Activated B cell treated with CpG ODN at 0.5 μM for 24 hours (primary cell): ENCODE measurements at regions of chr17 and their contacts with region 1.

Region 1: DNA sequence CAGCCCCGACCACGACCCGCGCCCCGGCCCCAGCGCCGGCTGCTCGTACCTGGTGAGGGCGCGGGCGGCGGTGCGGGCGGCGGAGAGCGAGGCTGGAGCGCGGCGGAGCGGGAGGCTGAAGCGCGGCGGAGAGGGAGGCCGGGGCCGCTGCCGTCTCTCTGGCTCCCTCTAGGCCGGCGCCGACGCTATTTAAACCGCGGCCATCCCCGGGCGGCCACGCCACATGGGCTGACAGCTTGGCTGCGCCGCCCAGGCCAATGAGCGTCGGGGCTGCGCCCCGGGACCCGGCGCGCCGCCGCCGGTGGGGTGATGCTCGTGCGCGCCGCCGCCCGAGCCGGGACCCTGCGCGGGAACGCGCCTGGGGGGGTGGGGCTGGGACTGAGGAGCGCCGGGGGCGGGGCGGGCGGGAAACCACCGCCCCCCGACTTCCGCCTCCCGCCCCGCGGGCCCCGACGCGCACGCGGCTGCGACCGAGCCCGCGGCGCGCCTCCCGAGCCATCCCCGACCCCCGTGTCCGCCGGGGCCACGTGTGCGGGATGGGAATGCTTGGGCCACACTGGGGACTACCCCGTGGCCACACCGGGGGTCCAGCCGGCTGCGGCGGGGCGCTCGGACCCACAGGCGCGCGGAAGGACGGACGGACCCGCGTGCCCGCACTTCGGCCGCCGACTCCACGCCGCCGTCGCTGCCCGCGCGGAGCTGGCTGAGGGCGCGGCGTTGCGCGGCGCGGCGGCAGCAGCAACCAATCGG is at the start of gene FASN:
- DNase-seq: peak; percentile 90
- ATAC-seq: peak; percentile 78
- H3K4me3 Mint-ChIP-seq: peak within 1 kb of the TSS; percentile 73
- H3K27ac Mint-ChIP-seq: no peak within 1 kb of the TSS
- H3K4me1 Mint-ChIP-seq: peaks cover 16% of the 10 kb centered on the region
- H3K27me3 Mint-ChIP-seq: no peaks in the 10 kb centered on the region
- CTCF ChIP-seq: no peak
- total RNA-seq, gene FASN: 104 and 121 TPM in 2 replicates

Region 2: DNA sequence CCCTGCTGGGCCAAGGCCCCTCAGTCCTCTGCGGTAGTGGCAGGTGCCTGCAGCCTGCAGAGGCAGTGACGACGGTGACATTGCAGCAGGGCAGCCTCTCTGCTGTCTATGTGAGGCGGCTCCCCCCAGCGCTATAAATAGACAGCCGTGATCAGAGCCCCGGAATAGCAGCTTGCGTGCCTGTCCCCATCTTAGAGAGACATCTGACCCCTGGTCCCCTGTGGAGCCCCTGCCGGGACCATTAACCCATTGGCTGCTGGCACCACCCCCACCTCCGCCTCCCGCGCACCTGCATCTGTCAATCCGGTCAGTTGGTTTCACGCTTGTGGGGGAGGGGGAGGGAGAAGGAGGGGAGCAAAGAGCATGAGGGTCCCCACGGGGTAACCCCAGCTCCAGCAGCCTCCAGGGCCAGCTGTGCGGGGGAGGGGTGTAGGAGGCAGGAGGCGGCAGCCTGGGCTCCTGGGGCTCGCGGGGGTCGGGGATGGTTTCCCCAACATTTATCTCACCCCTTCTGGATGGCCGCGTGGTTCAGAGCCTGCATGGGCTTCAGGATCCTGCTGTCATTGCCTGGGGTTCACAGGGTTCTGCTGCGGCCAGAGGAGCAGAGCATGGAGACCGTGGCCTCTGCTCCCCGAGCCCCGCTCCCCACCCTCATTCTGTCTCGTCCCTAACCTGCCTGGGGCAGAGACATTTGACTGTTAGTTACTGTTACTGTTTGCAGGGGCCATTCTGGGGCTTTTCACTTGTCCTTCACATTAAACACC is 156.3 kb before region 1 on chr17:
- CTCF ChIA-PET with region 1: no interaction called
- POLR2A ChIA-PET with region 1: interaction called, 3 read pairs
- intact Hi-C with region 1: loop called (anchors 5 kb)
- DNase-seq: no peak
- ATAC-seq: no peak
- H3K4me3 Mint-ChIP-seq: no peak overlapping the region
- H3K27ac Mint-ChIP-seq: no peak overlapping the region
- H3K4me1 Mint-ChIP-seq: peaks cover 9% of the 10 kb centered on the region
- H3K27me3 Mint-ChIP-seq: peaks cover 4% of the 10 kb centered on the region
- CTCF ChIP-seq: no peak

Region 3: DNA sequence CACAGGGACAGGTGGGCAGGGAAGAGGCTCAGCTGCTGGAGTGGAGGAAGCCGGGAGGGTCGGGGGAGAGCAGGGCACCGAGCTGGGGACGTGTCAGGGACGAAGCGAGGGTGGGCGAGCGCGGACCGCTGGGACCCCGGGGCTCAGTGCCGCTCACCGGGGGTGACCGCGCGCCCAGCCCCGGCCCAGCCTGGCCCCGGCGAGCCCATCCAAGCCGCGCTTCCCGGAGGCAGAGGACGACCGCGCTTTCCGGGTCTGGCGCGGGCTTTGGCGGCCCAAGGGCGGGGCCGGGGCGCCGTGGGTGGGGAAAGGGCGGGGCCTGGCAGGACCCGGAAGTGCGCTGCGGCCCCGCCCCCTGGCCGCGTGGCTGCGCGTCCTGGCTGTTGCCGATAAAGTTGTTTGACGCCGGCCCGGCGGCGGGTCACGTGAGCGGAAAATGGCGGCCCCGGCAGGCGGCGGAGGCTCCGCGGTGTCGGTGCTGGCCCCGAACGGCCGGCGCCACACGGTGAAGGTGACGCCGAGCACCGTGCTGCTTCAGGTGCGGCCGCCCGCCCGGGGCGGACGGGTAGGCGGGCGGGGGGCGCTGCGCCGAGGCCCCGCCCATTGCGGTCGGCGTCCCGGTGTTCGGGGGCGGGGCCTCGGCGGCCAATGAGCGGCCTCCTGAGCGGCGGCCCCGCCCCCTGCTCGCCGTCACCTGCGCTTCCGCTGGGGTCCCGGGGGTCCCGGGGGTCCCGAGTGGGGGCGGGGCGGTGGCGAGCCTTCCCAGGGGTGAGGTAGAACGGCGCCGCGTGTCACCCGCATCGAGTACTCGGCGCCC is 120.8 kb before region 1 on chr17 and contains the start of gene ASPSCR1:
- CTCF ChIA-PET with region 1: no interaction called
- POLR2A ChIA-PET with region 1: no interaction called
- intact Hi-C with region 1: loop called (anchors 2 kb)
- DNase-seq: peak; percentile 94
- ATAC-seq: peak; percentile 92
- H3K4me3 Mint-ChIP-seq: peak within 1 kb of the TSS; percentile 95
- H3K27ac Mint-ChIP-seq: peak within 1 kb of the TSS; percentile 93
- H3K4me1 Mint-ChIP-seq: peaks cover 27% of the 10 kb centered on the region
- H3K27me3 Mint-ChIP-seq: no peaks in the 10 kb centered on the region
- CTCF ChIP-seq: no peak
- total RNA-seq, gene ASPSCR1: 40.0 and 50.0 TPM in 2 replicates

Region 4: GRCh38 chr17:82051776-82052637 is 46.2 kb before region 1 on chr17 and contains the starts of genes GPS1 and RFNG:
- CTCF ChIA-PET with region 1: no interaction called
- POLR2A ChIA-PET with region 1: no interaction called
- intact Hi-C with region 1: loop called (anchors 1 kb)
- DNase-seq: peak; percentile 84
- ATAC-seq: peak; percentile 91
- H3K4me3 Mint-ChIP-seq: peak within 1 kb of the TSS; percentile 84
- H3K27ac Mint-ChIP-seq: peak within 1 kb of the TSS; percentile 78
- H3K4me1 Mint-ChIP-seq: peaks cover 17% of the 10 kb centered on the region
- H3K27me3 Mint-ChIP-seq: no peaks in the 10 kb centered on the region
- CTCF ChIP-seq: no peak
- total RNA-seq, gene GPS1: 88.7 and 94.7 TPM in 2 replicates
- total RNA-seq, gene RFNG: 17.7 and 18.7 TPM in 2 replicates

Region 5: GRCh38 chr17:82320956-82321927 is 223.0 kb after region 1 on chr17:
- CTCF ChIA-PET with region 1: no interaction called
- POLR2A ChIA-PET with region 1: no interaction called
- intact Hi-C with region 1: no loop called
- DNase-seq: peak; percentile 76
- ATAC-seq: peak; percentile 81
- H3K4me3 Mint-ChIP-seq: peak overlapping the region; percentile 73
- H3K27ac Mint-ChIP-seq: peak overlapping the region; percentile 56
- H3K4me1 Mint-ChIP-seq: peaks cover 3% of the 10 kb centered on the region
- H3K27me3 Mint-ChIP-seq: peaks cover 6% of the 10 kb centered on the region
- CTCF ChIP-seq: peak; percentile 48

Region 6: DNA sequence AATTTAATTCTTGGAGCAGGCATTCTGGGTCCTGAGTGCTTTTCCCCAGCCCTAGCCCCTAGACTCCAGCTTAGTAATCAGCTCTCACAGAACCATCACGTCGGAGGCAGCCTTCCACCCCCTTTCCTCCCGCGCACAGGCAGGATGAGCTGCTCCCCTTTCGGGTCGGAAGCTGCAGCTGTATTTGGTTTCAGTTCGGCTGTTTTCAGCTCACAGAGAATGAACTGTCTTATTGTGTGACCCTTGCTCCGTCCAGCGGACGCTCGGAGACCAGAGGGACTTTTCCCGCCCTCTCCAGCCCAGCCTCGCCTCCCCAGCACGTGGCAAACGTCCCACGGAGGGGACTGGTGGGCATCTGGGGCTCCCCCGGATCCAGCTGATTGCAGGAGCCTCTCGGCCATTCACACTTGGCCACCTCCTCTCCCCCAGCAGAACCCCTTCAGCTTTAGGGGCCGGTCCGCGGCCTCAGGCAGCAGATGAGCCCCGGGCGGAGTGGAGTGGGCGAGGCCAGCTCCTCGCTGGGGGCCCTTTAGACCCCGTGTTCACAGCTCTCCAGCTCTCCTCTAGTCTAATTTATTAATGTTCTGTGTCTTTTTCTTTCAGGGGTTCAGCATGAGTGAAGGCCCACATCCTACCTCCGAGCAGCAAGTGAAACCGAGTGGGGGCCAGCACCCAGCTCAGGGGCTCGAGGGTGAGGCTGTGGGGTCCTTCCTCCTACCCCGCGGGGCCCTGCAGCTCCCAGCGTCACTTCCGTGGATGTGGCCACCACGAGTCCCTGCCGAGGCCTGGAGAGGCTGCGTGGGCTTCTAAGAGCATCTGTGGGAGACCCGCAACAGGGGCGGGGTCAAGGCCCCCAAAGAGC is 272.5 kb after region 1 on chr17:
- CTCF ChIA-PET with region 1: no interaction called
- POLR2A ChIA-PET with region 1: no interaction called
- intact Hi-C with region 1: no loop called
- DNase-seq: no peak
- ATAC-seq: peak; percentile 34
- H3K4me3 Mint-ChIP-seq: peak overlapping the region; percentile 77
- H3K27ac Mint-ChIP-seq: no peak overlapping the region
- H3K4me1 Mint-ChIP-seq: peaks cover 24% of the 10 kb centered on the region
- H3K27me3 Mint-ChIP-seq: peaks cover 32% of the 10 kb centered on the region
- CTCF ChIP-seq: no peak

Region 7: GRCh38 chr17:82751571-82752370 is 653.5 kb after region 1 on chr17 and contains the start of gene TBCD:
- CTCF ChIA-PET with region 1: no interaction called
- POLR2A ChIA-PET with region 1: no interaction called
- intact Hi-C with region 1: loop called (anchors 5 kb)
- DNase-seq: peak; percentile 86
- ATAC-seq: peak; percentile 88
- H3K4me3 Mint-ChIP-seq: peak within 1 kb of the TSS; percentile 84
- H3K27ac Mint-ChIP-seq: no peak within 1 kb of the TSS
- H3K4me1 Mint-ChIP-seq: peaks cover 22% of the 10 kb centered on the region
- H3K27me3 Mint-ChIP-seq: no peaks in the 10 kb centered on the region
- CTCF ChIP-seq: no peak
- total RNA-seq, gene TBCD: 49.9 and 50.9 TPM in 2 replicates